Colonic mucosa (tissue), 4 donors: ENCODE measurements at regions of chr11 and their contacts with region 1.

Region 1: DNA sequence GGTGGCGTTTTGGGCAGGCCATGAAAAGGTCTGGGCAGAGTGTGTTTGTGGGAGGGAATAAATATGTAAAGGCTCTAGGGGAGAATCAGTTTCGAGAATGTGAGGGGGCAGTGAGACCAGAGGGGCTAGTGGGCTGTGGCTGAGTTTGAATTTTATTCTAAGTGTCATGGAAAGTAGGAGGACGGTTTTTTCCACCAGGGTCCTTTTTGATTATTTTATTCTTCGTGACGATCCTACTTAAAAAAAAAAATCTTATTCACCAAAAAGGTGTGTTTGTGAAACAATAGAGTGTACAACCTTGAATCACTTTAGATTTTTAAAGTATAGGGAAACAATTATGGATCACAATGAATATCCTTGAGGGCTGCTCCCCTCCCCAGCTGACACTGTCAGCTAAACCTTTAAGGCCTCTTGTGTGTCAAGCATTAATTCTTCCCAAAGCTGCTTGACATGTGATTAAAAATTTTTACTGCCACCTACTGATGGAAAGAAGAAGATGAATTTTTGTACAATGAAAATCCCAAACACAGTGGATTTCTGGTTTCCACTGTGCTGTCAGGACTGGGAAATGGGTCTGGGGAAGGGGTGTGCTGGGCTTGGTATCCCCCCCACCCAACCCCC is 107.5 kb upstream of the OR4B1 start:
- DNase-seq: no peak
- H3K4me3 ChIP-seq: no peak overlapping the region
- H3K27ac ChIP-seq: peak overlapping the region; percentile 12
- H3K4me1 ChIP-seq: no peaks in the 10 kb centered on the region
- H3K27me3 ChIP-seq: no peaks in the 10 kb centered on the region
- CTCF ChIP-seq: peak; percentile 12

Region 2: DNA sequence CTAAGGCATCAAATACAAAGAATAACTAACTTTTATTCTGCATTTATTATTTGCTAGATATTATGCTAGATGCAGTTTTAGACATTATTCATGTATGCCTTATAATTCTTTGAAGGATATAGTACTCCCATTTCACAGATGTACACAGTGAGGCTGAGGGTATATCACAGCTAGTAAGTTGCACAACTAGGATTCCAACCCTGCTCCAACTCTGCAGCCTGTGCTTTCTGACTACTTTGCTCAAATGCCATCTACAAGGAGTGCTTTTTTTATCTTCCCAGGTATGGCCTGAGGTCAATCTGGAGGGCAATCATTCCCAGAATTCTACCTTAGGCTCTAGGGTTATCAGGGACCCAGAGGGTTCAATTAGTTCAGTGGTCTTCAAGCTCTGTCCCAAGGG is 289.4 kb before region 1 on chr11:
- intact Hi-C with region 1: no loop called
- DNase-seq: no peak
- H3K4me3 ChIP-seq: no peak overlapping the region
- H3K27ac ChIP-seq: no peak overlapping the region
- H3K4me1 ChIP-seq: no peaks in the 10 kb centered on the region
- H3K27me3 ChIP-seq: no peaks in the 10 kb centered on the region
- CTCF ChIP-seq: no peak

Region 3: DNA sequence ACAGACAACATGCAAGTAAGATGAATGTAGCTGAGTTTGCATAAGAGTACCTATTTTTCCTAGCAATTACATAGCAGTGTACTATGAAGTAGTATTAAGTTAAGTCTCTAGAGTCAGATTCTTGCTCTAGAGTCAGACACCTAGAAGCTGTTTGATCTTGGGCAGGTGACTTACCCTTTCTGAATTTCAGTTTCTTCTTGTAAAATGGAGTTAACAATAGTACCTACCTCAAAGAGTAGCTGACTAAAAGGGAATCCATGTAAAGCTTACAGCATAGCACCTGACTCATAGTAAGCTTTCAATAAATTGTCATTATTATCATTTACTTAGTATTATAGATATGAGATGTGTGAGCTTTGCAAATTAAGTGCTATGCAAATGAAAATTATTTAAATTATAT is 176.6 kb before region 1 on chr11:
- intact Hi-C with region 1: loop called (anchors 2 kb)
- DNase-seq: no peak
- H3K4me3 ChIP-seq: no peak overlapping the region
- H3K27ac ChIP-seq: no peak overlapping the region
- H3K4me1 ChIP-seq: no peaks in the 10 kb centered on the region
- H3K27me3 ChIP-seq: no peaks in the 10 kb centered on the region
- CTCF ChIP-seq: no peak

Region 4: GRCh38 chr11:47967577-47968425 is 141.4 kb before region 1 on chr11:
- intact Hi-C with region 1: loop called (anchors 10 kb)
- DNase-seq: no peak
- H3K4me3 ChIP-seq: no peak overlapping the region
- H3K27ac ChIP-seq: no peak overlapping the region
- H3K4me1 ChIP-seq: no peaks in the 10 kb centered on the region
- H3K27me3 ChIP-seq: no peaks in the 10 kb centered on the region
- CTCF ChIP-seq: no peak

Region 5: DNA sequence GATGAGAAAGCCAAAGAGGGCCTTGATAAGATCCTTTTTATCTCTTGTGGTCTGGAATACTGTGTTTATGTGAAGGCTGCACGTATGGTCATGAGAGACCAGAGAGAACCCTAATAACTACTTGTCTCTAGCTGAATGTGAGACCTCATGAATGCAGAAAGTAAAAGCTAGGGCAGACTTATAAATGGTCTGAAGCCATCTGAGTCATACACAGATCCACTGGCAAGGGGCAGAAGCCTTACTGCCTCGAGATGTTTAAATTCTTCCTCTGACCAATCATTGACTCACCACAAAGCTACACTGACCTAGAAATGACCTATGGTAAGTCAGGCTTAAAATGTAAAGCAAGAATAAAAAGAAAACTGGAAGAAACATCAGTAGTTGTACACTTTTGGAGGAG is 84.7 kb after region 1 on chr11:
- intact Hi-C with region 1: no loop called
- DNase-seq: no peak
- H3K4me3 ChIP-seq: no peak overlapping the region
- H3K27ac ChIP-seq: no peak overlapping the region
- H3K4me1 ChIP-seq: no peaks in the 10 kb centered on the region
- H3K27me3 ChIP-seq: no peaks in the 10 kb centered on the region
- CTCF ChIP-seq: no peak